Sciatic nerve (tissue), 2 donors: ENCODE measurements at regions of chr10 and their contacts with region 1.

Region 1: DNA sequence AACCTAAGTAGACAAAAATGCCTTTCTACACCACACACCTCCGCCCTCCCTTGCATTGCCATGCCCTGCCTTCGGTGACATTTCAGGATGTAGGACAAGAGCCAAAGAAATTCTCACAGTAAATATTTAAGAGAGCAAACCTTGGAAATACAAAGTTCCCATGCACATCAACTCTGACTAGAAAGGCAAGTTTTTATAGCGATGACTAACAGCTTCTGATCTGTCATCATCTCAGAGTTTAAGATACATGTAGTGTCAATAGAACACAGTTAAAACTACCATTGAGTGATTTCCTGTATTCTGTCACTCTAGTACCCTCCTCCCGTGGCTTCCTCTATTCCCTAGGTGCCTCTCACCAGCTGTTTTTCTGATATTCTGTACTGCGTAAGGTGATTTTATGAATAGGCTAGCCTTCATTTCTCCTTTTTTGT is 20.7 kb downstream of the SLC16A9 start:
- DNase-seq: no peak
- ATAC-seq: no peak

Region 2: DNA sequence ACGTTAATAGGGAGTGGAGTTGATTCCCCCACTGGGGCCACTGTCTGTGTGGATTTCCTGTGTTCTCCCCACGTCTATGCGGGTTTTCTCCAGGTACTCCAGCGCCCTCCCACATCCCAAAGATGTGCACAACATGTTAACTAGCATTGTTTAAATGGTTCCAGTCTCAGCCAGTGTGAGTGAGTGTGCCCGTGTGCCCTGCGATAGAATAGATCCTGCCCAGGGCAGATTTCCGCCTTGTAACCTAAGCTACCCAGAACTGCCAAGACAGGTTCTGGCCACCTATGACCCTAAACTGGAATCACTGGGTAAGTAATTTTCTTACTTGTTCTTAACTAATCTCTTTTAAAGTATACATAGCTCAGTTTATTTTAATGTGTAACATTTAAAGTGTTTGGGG is 159.0 kb after region 1 on chr10:
- intact Hi-C with region 1: loop called (anchors 2 kb)
- DNase-seq: no peak
- ATAC-seq: no peak

Region 3: GRCh38 chr10:59976909-59977308 is 288.0 kb after region 1 on chr10:
- intact Hi-C with region 1: no loop called
- DNase-seq: no peak
- ATAC-seq: no peak

Region 4: GRCh38 chr10:61655335-61655851 is 1966.5 kb after region 1 on chr10:
- intact Hi-C with region 1: no loop called
- DNase-seq: no peak
- ATAC-seq: no peak